Naive thymus-derived CD4-positive, alpha-beta T cell (primary cell): ENCODE measurements at regions of chr9 and their contacts with region 1.

Region 1: GRCh38 chr9:112581469-112582176 is 95.0 kb downstream of the KIAA1958 start:
- DNase-seq: no peak
- ATAC-seq: no peak
- H3K4me3 ChIP-seq: no peak overlapping the region
- H3K4me3 Mint-ChIP-seq: no peak overlapping the region
- H3K27ac ChIP-seq: no peak overlapping the region
- H3K27ac Mint-ChIP-seq: no peak overlapping the region
- H3K4me1 ChIP-seq: no peaks in the 10 kb centered on the region
- H3K4me1 Mint-ChIP-seq: no peaks in the 10 kb centered on the region
- H3K27me3 ChIP-seq: no peaks in the 10 kb centered on the region
- H3K27me3 Mint-ChIP-seq: no peaks in the 10 kb centered on the region

Region 2: DNA sequence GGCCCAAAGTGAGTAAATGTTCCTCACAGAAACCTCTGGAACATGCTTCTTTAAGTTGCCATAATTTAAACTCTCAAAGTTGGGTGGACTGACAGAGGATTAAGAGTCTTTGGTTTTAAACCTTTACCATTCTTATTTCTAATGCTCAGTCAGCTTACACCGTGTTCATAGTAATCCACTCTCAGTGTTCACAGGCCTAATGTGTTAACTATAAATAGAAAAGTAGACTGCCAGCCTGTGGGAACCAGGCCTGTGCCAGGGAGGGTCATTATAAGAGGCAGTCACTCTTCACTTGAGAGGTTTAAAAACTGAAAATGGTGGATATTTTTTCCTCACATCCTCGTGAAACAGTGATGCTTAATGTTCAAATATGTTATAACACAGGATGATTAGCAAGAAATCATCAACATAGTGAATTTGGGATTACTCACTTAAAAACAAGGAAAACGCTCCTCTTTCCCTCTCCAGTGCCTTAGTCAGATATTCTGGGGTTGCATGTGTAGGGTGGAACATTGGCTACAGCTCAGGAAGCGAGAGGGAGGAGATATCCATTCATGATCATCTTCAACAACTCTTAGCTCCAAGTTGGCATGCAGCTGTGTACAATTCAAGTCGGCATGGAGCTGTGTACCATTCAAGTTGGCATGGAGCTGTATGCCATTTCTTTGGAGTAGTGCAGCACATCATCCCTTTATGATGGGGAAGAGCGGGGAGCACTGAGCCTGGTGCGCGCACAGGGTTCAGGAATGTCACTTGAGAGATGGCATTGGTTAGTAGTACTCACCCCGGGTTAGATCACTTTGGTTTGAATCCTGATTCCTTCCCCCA is 29.2 kb before region 1 on chr9:
- CTCF ChIA-PET with region 1: no interaction called
- POLR2A ChIA-PET with region 1: no interaction called
- intact Hi-C with region 1: loop called in 1 of 2 experiments (anchors 1 kb)
- DNase-seq: no peak
- ATAC-seq: no peak
- H3K4me3 ChIP-seq: no peak overlapping the region
- H3K4me3 Mint-ChIP-seq: no peak overlapping the region
- H3K27ac ChIP-seq: no peak overlapping the region
- H3K27ac Mint-ChIP-seq: no peak overlapping the region
- H3K4me1 ChIP-seq: no peaks in the 10 kb centered on the region
- H3K4me1 Mint-ChIP-seq: peaks cover 0 to 10% (median 2%) of the 10 kb centered on the region in 7 donors
- H3K27me3 ChIP-seq: no peaks in the 10 kb centered on the region
- H3K27me3 Mint-ChIP-seq: no peaks in the 10 kb centered on the region

Region 3: DNA sequence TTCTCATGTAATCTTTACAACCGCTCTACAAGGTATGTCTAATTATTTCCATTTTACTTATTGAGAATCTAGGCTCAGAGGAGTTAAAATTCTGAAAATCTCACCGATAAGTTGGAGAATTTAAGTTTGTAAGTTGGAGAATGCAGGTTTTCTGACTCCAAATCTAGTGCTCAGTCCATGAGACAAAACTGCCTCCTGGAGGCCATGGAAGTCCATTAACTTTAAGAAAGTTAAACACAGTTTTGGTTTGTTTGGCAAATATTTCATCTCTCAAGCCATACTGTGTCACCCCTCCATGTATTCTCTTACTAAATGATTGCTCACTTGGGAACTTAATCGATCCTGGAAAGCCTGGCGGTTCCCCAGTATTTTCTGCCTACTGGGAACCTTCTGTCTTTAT is 83.7 kb after region 1 on chr9:
- CTCF ChIA-PET with region 1: no interaction called
- POLR2A ChIA-PET with region 1: no interaction called
- intact Hi-C with region 1: no loop called
- DNase-seq: no peak
- ATAC-seq: no peak
- H3K4me3 ChIP-seq: no peak overlapping the region
- H3K4me3 Mint-ChIP-seq: no peak overlapping the region
- H3K27ac ChIP-seq: no peak overlapping the region
- H3K27ac Mint-ChIP-seq: no peak overlapping the region
- H3K4me1 ChIP-seq: no peaks in the 10 kb centered on the region
- H3K4me1 Mint-ChIP-seq: no peaks in the 10 kb centered on the region
- H3K27me3 ChIP-seq: no peaks in the 10 kb centered on the region
- H3K27me3 Mint-ChIP-seq: no peaks in the 10 kb centered on the region